Thyroid gland (tissue), 4 donors: ENCODE measurements at regions of chrX and their contacts with region 1.

Region 1: GRCh38 chrX:106363214-106363613 is 195.1 kb downstream of the PWWP3B start:
- DNase-seq: no peak
- H3K4me3 ChIP-seq: no peak overlapping the region
- H3K27ac ChIP-seq: no peak overlapping the region
- H3K4me1 ChIP-seq: no peaks in the 10 kb centered on the region
- H3K27me3 ChIP-seq: no peaks in the 10 kb centered on the region
- CTCF ChIP-seq: no peak
- POLR2A ChIP-seq: no peak

Region 2: DNA sequence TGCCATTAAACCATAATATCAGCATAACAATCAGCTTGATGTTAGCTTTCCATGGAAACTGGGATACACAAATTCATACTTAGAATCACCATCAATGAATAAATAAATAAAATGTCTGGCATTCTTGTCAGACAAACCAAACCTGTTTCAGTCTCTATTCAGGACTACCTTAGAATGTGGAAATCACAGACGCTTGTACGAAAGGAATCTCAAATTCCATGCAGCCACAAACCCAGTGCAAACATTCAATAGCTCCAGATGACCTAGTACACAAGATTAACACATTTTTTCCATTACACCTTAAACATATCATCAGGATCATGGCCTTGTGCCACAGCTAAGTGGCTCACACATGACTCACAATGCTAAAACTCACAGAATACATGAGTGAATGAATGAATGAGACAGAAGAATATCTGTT is 61.0 kb before region 1 on chrX:
- intact Hi-C with region 1: loop called (anchors 10 kb)
- DNase-seq: peak; percentile 1 to 2
- H3K4me3 ChIP-seq: no peak overlapping the region
- H3K27ac ChIP-seq: no peak overlapping the region
- H3K4me1 ChIP-seq: no peaks in the 10 kb centered on the region
- H3K27me3 ChIP-seq: no peaks in the 10 kb centered on the region
- CTCF ChIP-seq: no peak
- POLR2A ChIP-seq: no peak